Sciatic nerve (tissue), 2 donors: ENCODE measurements at regions of chr10 and their contacts with region 1.

Region 1: DNA sequence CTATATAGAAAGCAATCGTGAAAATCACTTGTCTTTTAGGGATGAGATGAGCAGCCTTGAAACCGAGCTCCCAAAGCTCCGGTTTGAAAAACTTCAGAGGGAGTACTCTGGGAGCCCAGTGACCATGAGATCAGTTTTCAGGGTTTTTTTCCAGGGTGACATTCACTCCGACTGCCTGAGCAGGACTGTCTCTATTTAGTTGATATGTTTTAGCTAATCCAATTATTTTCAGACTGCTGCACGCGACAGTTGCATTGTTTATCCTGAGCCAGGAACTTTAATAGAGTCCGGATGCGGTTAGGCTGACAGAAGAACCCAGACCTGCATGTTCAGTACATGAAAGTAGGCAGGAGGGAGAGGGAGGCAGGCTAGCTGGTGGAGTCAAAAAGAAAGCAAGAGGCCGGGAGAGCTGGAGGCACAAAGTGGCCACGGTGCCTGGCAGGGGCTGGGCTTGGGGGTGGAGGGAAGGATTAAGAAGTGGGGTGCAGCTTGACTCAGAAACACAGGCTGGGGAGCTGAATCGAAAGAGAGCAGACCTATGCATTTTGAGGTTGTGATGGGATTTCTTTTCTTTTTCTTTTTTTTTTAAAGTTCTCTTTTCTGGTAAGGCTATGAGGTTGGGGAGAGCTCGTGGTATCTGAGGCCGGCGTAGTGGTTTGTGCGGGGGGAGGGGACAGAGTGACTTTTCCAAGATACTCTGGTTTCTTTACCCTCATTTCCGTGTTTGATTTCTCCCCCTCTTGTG is 5.6 kb downstream of the GATA3 start:
- DNase-seq: no peak
- ATAC-seq: no peak

Region 2: DNA sequence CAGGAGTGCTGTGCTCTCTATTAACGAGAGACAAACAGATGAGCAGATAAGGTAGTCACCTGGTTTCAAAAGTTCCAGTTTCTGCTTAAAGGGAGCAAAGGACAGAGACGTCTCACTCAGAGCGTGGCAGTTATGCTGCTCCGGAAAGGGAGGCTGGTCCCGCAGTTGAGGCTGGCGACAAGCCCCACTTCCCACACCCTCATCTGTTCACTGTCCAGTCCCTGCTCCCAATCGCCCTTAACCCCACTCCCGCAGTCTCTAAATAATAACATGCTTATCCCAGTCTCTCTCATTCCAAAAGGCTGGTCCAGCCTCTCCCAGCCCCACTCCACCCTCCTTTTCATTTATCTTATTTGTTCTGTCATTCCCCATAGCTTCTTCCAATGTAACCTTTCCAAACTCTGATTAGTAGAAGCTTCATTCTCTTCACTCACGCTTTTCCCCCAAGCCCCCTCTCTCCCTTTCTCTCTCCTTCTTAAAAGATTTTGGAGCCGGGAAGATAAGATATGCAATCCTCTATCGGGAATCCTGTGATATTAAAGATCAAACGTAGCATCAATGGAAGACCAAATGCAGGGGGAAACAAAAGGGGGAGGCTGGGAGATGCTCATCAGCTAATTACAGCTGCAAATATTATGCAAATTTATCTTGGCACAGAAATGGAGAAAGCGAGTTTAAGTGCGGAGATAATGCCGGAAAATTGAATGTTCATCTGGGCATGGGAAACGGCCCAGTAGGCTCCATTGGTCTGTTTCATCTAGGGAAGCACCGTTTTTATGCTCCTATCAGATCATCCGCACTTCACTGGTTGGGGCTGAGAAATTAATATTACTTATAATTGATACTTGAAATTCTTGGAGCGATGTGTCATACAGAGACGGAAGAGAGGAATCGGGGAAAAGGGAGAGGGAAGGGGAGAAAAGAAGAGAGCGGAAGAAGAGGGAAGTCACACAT is 21.9 kb before region 1 on chr10:
- intact Hi-C with region 1: loop called (anchors 2 kb)
- DNase-seq: peak; percentile 18
- ATAC-seq: no peak